ENCODE measurements at regions of chr3 and their contacts with region 1.

Region 1: DNA sequence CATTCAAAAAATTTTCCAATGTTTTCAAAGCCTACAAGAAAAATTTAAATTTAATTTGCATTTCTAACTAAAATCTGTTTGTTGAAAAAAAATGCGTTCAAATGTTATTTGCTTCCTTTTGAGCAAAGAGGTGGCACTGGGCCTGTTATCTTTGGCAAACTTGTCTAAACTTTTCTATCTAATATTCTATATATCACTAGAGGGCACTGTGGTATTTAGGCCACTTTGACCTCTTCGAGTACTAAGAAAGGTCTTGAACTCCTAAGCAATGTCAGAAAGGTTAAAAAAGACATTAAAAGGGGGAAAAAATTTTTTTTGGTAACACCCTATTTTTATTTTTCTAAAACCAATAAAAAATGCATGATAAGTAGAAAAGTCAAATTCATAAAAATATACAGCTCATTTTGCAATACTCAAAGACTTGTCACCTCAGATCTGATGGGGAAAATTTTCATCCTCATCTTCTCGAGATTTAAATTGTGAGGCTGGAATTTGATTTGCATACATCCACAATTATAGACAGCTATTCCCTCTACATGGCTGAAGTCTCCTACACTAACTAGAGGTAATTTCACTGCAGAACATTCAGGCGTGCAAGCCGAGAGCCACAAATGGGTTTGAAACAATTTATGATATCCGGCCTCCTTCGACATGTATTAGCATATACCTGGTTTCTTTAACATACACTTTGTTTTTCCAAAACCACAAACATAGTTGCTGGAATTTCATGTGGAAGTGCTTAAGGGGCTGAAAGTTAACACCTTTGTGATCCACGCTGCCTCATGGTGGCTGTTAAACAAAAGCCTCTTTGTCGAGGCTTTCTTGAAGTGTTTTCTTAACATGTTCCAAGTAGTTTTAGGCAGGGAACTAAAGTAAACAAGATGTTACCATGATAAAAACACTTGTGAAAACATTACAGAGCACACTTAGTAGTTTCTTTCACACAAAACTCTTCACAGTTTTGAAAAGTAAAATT is 576.4 kb downstream of the FOXP1 start:
- DNase-seq: peak in 4 of 5 donors; percentile 40 to 45 (median 42)
- H3K4me3 ChIP-seq: no peak overlapping the region
- H3K4me3 Mint-ChIP-seq: peak overlapping the region in 2 of 8 donors; percentile 47 to 66
- H3K27ac ChIP-seq: peak overlapping the region; percentile 68
- H3K27ac Mint-ChIP-seq: peak overlapping the region; percentile 64 to 98 (median 88)
- H3K4me1 ChIP-seq: peaks cover 70% of the 10 kb centered on the region
- H3K4me1 Mint-ChIP-seq: peaks cover 50 to 81% (median 68%) of the 10 kb centered on the region in 4 donors
- H3K27me3 ChIP-seq: no peaks in the 10 kb centered on the region
- H3K27me3 Mint-ChIP-seq: no peaks in the 10 kb centered on the region

Region 2: DNA sequence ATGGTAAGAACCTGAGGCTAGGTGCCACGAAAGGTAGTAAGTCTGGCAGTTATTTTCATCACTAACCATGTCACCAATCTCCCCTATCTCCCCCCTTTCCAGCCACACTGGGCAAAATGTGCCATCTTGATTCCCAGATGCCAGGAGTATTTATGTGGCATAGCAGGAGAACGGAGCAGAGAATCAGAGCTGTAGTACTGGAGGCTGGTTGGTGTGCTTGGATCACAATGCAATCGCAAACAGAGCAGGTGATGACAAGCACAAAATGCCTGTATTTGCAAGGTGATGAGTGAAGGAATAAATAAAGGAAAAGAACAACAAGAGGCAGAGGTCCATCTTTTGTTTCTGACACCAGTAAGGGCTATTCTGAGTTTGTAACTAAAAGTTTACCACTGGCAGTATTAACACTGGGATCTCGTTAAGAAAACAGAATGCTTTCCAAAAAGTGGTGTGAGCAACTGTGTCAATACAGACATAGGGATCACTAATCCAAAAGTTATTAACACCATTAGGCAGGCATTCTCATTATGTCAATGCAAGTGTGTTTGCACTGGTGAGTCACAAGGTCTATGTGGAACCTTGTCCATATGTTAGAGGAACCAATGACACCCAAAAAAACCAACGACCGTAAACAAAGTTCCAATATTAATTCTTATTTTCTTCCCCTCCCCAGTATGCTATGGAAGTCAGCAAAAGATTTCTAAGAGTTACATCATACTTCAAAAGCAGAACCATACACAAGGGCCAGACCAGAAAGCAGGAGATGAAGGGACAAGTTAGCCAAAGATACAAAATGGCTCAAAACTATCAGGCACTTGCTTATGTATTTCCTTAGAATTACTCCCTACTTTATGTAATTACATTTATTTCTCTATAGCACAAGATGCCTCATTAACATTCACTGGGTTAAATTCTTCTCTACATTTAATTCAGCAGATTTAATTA is 19.8 kb after region 1 on chr3:
- CTCF ChIA-PET with region 1: interaction called, 6 read pairs
- POLR2A ChIA-PET with region 1: interaction called, 5 read pairs
- intact Hi-C with region 1: loop called (anchors 2 kb)
- DNase-seq: no peak
- H3K4me3 ChIP-seq: no peak overlapping the region
- H3K4me3 Mint-ChIP-seq: peak overlapping the region in 2 of 8 donors; percentile 7 to 29
- H3K27ac ChIP-seq: no peak overlapping the region
- H3K27ac Mint-ChIP-seq: peak overlapping the region; percentile 21 to 80 (median 33)
- H3K4me1 ChIP-seq: peaks cover 63% of the 10 kb centered on the region
- H3K4me1 Mint-ChIP-seq: peaks cover 58 to 96% (median 81%) of the 10 kb centered on the region in 4 donors
- H3K27me3 ChIP-seq: no peaks in the 10 kb centered on the region
- H3K27me3 Mint-ChIP-seq: no peaks in the 10 kb centered on the region

Region 3: GRCh38 chr3:71305231-71306206 is 298.4 kb after region 1 on chr3:
- CTCF ChIA-PET with region 1: no interaction called
- POLR2A ChIA-PET with region 1: no interaction called
- intact Hi-C with region 1: loop called (anchors 2 kb)
- DNase-seq: peak in 2 of 5 donors; percentile 14 to 15
- H3K4me3 ChIP-seq: peak overlapping the region; percentile 21 to 30
- H3K4me3 Mint-ChIP-seq: peak overlapping the region; percentile 82 to 96 (median 88)
- H3K27ac ChIP-seq: peak overlapping the region; percentile 11
- H3K27ac Mint-ChIP-seq: peak overlapping the region; percentile 81 to 96 (median 88)
- H3K4me1 ChIP-seq: peaks cover 80% of the 10 kb centered on the region
- H3K4me1 Mint-ChIP-seq: peaks cover 62 to 92% (median 76%) of the 10 kb centered on the region in 4 donors
- H3K27me3 ChIP-seq: no peaks in the 10 kb centered on the region
- H3K27me3 Mint-ChIP-seq: no peaks in the 10 kb centered on the region

Region 4: DNA sequence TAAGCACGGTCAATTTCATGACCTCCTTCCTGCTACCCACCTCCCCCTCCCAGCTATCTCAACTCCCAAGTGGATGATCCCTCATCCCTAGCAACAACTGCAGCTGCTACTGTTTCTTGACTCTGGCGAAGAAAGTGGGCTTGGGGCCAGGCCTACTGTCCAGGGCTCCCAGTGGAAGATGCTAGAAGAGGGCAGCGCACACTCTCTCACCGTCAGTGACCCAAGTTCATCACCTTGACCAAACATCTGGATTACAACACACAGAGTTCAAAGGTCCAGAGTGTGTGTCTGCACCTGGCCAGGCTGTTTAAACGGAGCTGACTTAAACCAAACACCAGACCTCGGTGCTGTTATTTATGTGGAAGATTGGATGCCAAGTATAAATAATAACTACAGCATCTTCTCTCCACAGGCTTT is 1455.5 kb after region 1 on chr3:
- CTCF ChIA-PET with region 1: no interaction called
- POLR2A ChIA-PET with region 1: no interaction called
- intact Hi-C with region 1: no loop called
- DNase-seq: no peak
- H3K4me3 ChIP-seq: no peak overlapping the region
- H3K4me3 Mint-ChIP-seq: no peak overlapping the region
- H3K27ac ChIP-seq: no peak overlapping the region
- H3K27ac Mint-ChIP-seq: no peak overlapping the region
- H3K4me1 ChIP-seq: no peaks in the 10 kb centered on the region
- H3K4me1 Mint-ChIP-seq: peaks cover 0 to 2% (median 0%) of the 10 kb centered on the region in 4 donors
- H3K27me3 ChIP-seq: no peaks in the 10 kb centered on the region
- H3K27me3 Mint-ChIP-seq: peaks cover 10 to 11% of the 10 kb centered on the region in 2 donors